ENCODE measurements at regions of chr2 and their contacts with region 1.

Region 1: GRCh38 chr2:167212014-167212648 is 323.9 kb downstream of the XIRP2 start:
- DNase-seq: no peak
- ATAC-seq: peak; percentile 44 to 73

Region 2: DNA sequence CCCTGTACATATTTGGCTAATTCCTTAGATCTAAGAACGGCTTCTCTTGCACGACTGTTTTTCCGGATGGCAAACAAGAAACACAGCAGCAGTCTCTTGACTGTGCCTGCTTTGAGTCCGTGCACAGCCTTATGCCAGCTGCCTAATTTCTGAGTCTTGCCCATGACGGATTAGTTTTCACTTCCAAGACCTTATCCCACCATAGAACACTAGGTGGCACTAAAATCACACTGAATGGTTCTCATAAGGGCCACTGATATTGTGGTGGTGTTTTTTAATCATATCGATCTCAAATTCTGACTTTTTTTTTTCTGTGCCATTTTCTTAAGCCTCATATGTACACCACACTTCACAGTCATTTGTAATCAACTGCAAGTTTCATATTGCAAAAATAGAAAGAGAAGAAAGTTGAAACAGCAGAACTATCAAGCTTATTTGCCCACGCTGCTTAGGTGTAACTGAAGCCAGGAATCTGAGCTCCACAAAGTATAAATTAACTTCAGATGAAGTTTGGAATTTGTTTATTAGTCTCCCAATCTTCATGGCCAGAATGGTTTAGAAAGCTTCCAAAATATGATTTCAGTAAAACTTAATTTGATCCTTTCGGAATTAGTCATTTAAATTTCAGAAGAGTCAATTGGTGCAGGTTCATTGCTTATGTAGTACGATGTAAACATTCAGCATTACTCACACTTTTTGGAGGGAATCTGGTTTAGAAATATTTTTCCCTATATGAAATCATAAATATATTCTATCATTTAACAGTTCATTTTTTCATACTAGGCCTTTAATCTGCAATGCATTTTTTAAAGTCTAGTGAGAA is 672.6 kb before region 1 on chr2:
- intact Hi-C with region 1: loop called in 1 of 2 experiments (anchors 5 kb)
- DNase-seq: no peak
- ATAC-seq: peak; percentile 67 to 75

Region 3: GRCh38 chr2:166627893-166628292 is 584.2 kb before region 1 on chr2:
- intact Hi-C with region 1: loop called in 1 of 2 experiments (anchors 10 kb)
- DNase-seq: no peak
- ATAC-seq: peak in 1 of 2 donors; percentile 68

Region 4: DNA sequence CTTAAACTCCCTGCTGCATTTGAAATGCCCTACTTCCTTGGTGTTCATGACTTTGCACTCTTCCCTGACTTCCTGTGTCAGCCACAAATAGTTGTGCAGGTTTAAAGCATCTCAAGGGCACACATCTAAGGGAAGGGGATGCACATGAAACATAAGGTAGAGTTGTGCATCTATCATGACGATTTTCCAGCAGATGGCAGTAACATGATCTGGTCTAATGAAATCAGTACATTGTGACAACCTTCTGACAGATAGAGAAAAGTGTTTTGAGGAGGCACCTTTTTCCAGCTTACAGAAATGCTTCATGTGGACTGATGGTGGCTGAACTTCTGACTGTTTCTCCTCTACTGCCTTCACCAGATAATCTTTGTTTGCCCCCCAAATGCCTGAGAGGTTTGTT is 85.0 kb before region 1 on chr2:
- intact Hi-C with region 1: loop called (anchors 5 to 10 kb)
- DNase-seq: no peak
- ATAC-seq: peak; percentile 33 to 59

Region 5: GRCh38 chr2:167134381-167135072 is 77.6 kb before region 1 on chr2:
- intact Hi-C with region 1: loop called (anchors 5 to 10 kb)
- DNase-seq: no peak
- ATAC-seq: no peak

Region 6: GRCh38 chr2:167581961-167582574 is 369.9 kb after region 1 on chr2:
- intact Hi-C with region 1: no loop called
- DNase-seq: no peak
- ATAC-seq: no peak

Measured in left cardiac atrium (tissue), 4 donors.